T-cell (primary cell): ENCODE measurements at regions of chr15 and their contacts with region 1.

Region 1: GRCh38 chr15:78108299-78109084 is 16.1 kb downstream of the SH2D7 start:
- DNase-seq: peak; percentile 71 to 91 (median 82)
- ATAC-seq: peak; percentile 77 to 88 (median 82)
- H3K4me3 ChIP-seq: no peak overlapping the region
- H3K4me3 Mint-ChIP-seq: no peak overlapping the region
- H3K27ac ChIP-seq: no peak overlapping the region
- H3K27ac Mint-ChIP-seq: no peak overlapping the region
- H3K4me1 ChIP-seq: peaks cover 11 to 37% of the 10 kb centered on the region in 2 experiments
- H3K4me1 Mint-ChIP-seq: peaks cover 30 to 45% (median 33%) of the 10 kb centered on the region in 3 donors
- H3K27me3 ChIP-seq: peaks cover 0 to 3% of the 10 kb centered on the region in 2 experiments
- H3K27me3 Mint-ChIP-seq: no peaks in the 10 kb centered on the region

Region 2: GRCh38 chr15:77966540-77967290 is 141.8 kb before region 1 on chr15:
- CTCF ChIA-PET with region 1: interaction called, 5 to 40 read pairs
- POLR2A ChIA-PET with region 1: interaction called in 1 of 2 experiments, 3 read pairs
- DNase-seq: peak in 22 of 35 experiments; percentile 10 to 70 (median 36)
- ATAC-seq: peak; percentile 58 to 77 (median 67)
- H3K4me3 ChIP-seq: no peak overlapping the region
- H3K4me3 Mint-ChIP-seq: no peak overlapping the region
- H3K27ac ChIP-seq: no peak overlapping the region
- H3K27ac Mint-ChIP-seq: no peak overlapping the region
- H3K4me1 ChIP-seq: no peaks in the 10 kb centered on the region
- H3K4me1 Mint-ChIP-seq: peaks cover 0 to 5% (median 2%) of the 10 kb centered on the region in 3 donors
- H3K27me3 ChIP-seq: peaks cover 0 to 2% of the 10 kb centered on the region in 2 experiments
- H3K27me3 Mint-ChIP-seq: no peaks in the 10 kb centered on the region

Region 3: DNA sequence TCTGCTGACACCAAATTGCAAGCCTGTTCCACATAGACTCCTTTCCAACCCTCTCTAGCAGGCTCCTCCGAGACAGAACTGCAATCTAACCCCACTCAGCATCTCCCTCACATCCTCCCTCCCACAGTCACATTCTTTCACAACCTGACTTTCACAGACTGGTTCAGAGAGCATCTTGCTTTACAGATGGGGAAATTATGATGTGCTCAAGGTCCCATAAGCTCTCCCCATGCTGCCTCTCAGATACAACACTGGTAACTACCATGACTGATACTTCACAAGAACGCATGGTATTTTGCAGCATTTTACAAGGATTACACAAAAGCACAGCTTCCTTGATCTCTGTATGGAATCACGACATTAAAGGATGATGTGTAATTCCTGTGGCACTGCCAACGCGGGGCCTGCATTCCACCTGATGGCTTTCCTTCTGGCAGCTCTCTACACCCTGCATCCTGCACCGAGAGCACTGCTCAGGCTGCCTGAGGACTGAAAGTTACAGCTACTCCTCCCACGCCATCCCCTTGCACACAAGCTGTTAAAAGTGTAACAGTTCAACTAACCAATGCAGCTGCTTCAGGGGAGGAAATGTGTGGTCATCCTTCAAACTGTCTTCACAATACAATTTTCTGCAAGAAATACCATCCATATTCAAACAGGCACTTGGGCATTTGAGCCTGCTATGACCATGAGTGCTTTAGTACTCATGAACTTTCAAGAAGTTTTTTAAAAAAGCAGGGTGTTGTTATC is 58.6 kb before region 1 on chr15:
- CTCF ChIA-PET with region 1: interaction called in 1 of 2 experiments, 11 read pairs
- POLR2A ChIA-PET with region 1: interaction called in 1 of 2 experiments, 5 read pairs
- DNase-seq: peak in 18 of 35 experiments; percentile 33 to 67 (median 48)
- ATAC-seq: peak; percentile 62 to 73 (median 68)
- H3K4me3 ChIP-seq: peak overlapping the region; percentile 10 to 29
- H3K4me3 Mint-ChIP-seq: peak overlapping the region; percentile 54 to 78 (median 55)
- H3K27ac ChIP-seq: peak overlapping the region; percentile 77
- H3K27ac Mint-ChIP-seq: peak overlapping the region; percentile 95 to 96
- H3K4me1 ChIP-seq: peaks cover 80 to 85% of the 10 kb centered on the region in 2 experiments
- H3K4me1 Mint-ChIP-seq: peaks cover 97 to 99% (median 98%) of the 10 kb centered on the region in 3 donors
- H3K27me3 ChIP-seq: no peaks in the 10 kb centered on the region
- H3K27me3 Mint-ChIP-seq: no peaks in the 10 kb centered on the region

Region 4: DNA sequence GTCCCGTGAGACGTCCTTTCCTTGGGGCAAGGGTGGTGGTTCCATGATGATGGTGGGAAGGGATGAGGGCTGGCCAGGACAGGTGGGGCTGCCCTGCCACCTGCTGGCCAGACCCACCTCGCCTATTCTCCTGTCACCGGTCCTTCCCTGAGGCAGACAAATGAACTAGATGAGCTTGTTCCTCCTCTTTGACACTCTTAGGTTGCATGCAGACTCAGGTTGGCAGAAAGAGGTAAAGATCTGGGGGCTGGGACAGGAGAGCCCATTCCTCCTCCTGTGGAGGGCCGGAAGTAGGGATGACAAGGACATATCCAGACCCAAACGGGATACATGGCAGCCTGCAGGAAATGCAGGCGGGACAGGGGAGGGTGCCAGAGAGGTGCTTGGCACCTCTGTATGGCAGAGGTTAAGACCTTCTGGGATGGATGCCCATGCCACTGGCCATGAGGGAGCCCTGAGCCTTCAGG is 87.3 kb after region 1 on chr15:
- CTCF ChIA-PET with region 1: interaction called in 1 of 2 experiments, 31 read pairs
- POLR2A ChIA-PET with region 1: no interaction called
- DNase-seq: peak in 32 of 35 experiments; percentile 8 to 72 (median 33)
- ATAC-seq: peak; percentile 60 to 89 (median 80)
- H3K4me3 ChIP-seq: no peak overlapping the region
- H3K4me3 Mint-ChIP-seq: no peak overlapping the region
- H3K27ac ChIP-seq: no peak overlapping the region
- H3K27ac Mint-ChIP-seq: no peak overlapping the region
- H3K4me1 ChIP-seq: peaks cover 0 to 4% of the 10 kb centered on the region in 2 experiments
- H3K4me1 Mint-ChIP-seq: peaks cover 0 to 4% (median 0%) of the 10 kb centered on the region in 3 donors
- H3K27me3 ChIP-seq: no peaks in the 10 kb centered on the region
- H3K27me3 Mint-ChIP-seq: no peaks in the 10 kb centered on the region

Region 5: GRCh38 chr15:79004336-79004735 is 895.8 kb after region 1 on chr15:
- CTCF ChIA-PET with region 1: no interaction called
- POLR2A ChIA-PET with region 1: no interaction called
- DNase-seq: peak in 1 of 35 experiments; percentile 16
- ATAC-seq: peak in 2 of 4 experiments; percentile 16 to 17
- H3K4me3 ChIP-seq: no peak overlapping the region
- H3K4me3 Mint-ChIP-seq: no peak overlapping the region
- H3K27ac ChIP-seq: no peak overlapping the region
- H3K27ac Mint-ChIP-seq: no peak overlapping the region
- H3K4me1 ChIP-seq: peaks cover 0 to 9% of the 10 kb centered on the region in 2 experiments
- H3K4me1 Mint-ChIP-seq: peaks cover 0 to 9% (median 8%) of the 10 kb centered on the region in 3 donors
- H3K27me3 ChIP-seq: peaks cover 0 to 13% of the 10 kb centered on the region in 2 experiments
- H3K27me3 Mint-ChIP-seq: no peaks in the 10 kb centered on the region